Mammary epithelial cell (primary cell): ENCODE measurements at regions of chr9 and their contacts with region 1.

Region 1: DNA sequence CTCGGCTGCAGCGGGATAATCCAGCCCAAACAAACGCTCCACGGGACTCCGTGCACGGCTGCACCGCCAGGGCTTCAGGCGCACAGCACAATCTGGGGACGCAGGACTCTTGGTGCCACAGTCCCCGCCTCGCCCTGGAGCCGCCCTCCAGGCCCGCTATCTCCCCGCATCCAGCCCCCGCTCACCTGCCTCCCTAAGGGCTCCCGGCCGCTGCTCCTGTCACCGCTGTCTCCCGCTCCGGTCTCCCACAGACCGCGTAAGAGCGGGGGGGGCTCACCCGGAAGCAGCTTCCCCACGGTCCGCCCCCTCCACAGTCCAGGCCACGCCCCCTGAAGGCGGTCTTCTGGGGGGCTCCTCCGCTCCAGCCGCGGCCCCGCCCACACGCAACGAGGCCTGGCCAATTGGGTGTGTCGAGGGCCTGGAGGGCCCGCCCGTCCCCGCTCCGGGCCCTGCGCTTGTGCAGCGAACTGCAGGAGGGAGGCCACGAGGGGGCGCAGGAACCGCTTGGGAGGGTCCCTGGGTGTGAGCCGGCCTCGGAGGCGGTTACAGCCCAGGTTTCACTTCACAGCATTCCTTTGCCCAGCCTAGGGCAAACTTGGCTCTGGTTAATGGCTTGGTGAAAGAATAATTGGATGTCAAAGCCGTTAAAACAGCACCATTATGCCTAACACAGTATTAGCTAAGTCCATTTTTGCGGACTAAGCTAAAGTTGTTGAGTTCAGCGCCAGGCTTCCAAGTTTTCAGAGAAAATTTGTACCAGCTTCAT is at the start of gene ALAD:
- DNase-seq: peak; percentile 98
- H3K4me3 ChIP-seq: peak within 1 kb of the TSS; percentile 87 to 95 (median 87)
- H3K27ac ChIP-seq: peak within 1 kb of the TSS; percentile 53
- H3K4me1 ChIP-seq: peaks cover 8% of the 10 kb centered on the region
- H3K27me3 ChIP-seq: no peaks in the 10 kb centered on the region
- CTCF ChIP-seq: peak; percentile 87 to 97
- total RNA-seq, gene ALAD: 10.2 to 14.5 TPM

Region 2: GRCh38 chr9:113056191-113057106 is 344.8 kb before region 1 on chr9 and contains the start of gene ZFP37:
- CTCF ChIA-PET with region 1: interaction called, 10 read pairs
- dilution Hi-C with region 1: no loop called
- in situ Hi-C with region 1: no loop called
- intact Hi-C with region 1: no loop called
- DNase-seq: peak; percentile 90
- H3K4me3 ChIP-seq: peak within 1 kb of the TSS; percentile 61 to 85 (median 76)
- H3K27ac ChIP-seq: no peak within 1 kb of the TSS
- H3K4me1 ChIP-seq: no peaks in the 10 kb centered on the region
- H3K27me3 ChIP-seq: peaks cover 5% of the 10 kb centered on the region
- CTCF ChIP-seq: no peak
- total RNA-seq, gene ZFP37: 1.8 to 2.1 TPM

Region 3: GRCh38 chr9:113309204-113309813 is 91.9 kb before region 1 on chr9:
- CTCF ChIA-PET with region 1: interaction called, 6 read pairs
- dilution Hi-C with region 1: loop called (anchors 5 kb)
- in situ Hi-C with region 1: loop called in 1 of 2 experiments (anchors 5 kb)
- intact Hi-C with region 1: loop called (anchors 1 kb)
- DNase-seq: peak; percentile 9
- H3K4me3 ChIP-seq: no peak overlapping the region
- H3K27ac ChIP-seq: no peak overlapping the region
- H3K4me1 ChIP-seq: no peaks in the 10 kb centered on the region
- H3K27me3 ChIP-seq: no peaks in the 10 kb centered on the region
- CTCF ChIP-seq: peak; percentile 75 to 78

Region 4: DNA sequence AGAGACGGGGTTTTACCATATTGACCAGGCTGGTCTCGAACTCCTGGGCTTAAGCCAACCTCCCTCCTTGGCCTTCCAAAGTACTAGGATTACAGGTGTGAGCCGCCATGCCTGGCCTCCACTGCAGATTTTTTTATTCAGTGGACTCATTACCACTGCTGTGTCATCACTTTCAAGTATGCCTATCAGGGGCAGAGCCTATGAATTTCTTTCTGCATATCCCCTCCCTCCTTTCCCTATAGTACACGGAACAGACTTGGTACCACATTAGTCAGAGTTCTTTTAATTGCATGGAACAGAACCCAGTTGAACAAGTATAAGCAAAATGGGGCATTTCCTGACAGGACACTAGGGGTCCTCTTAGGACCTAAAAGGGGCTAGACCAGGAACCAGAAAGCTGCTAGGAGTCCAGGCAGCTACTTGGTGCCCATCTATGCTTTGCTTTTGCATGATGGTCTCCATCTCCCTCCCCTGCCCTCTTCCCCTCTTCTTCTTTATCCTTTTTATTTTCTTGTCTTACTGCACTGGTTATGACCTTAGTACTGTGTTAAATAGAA is 46.1 kb before region 1 on chr9:
- CTCF ChIA-PET with region 1: no interaction called
- dilution Hi-C with region 1: no loop called
- in situ Hi-C with region 1: no loop called
- intact Hi-C with region 1: loop called (anchors 2 kb)
- DNase-seq: no peak
- H3K4me3 ChIP-seq: no peak overlapping the region
- H3K27ac ChIP-seq: no peak overlapping the region
- H3K4me1 ChIP-seq: no peaks in the 10 kb centered on the region
- H3K27me3 ChIP-seq: peaks cover 12% of the 10 kb centered on the region
- CTCF ChIP-seq: no peak

Region 5: GRCh38 chr9:113657703-113658544 is 256.7 kb after region 1 on chr9:
- CTCF ChIA-PET with region 1: interaction called, 4 read pairs
- dilution Hi-C with region 1: no loop called
- in situ Hi-C with region 1: no loop called
- intact Hi-C with region 1: loop called (anchors 1 kb)
- DNase-seq: peak; percentile 67
- H3K4me3 ChIP-seq: no peak overlapping the region
- H3K27ac ChIP-seq: no peak overlapping the region
- H3K4me1 ChIP-seq: peaks cover 5% of the 10 kb centered on the region
- H3K27me3 ChIP-seq: no peaks in the 10 kb centered on the region
- CTCF ChIP-seq: peak; percentile 93 to 97